SK-N-SH (cell line): ENCODE measurements at regions of chr12 and their contacts with region 1.

Region 1: GRCh38 chr12:76790564-76791552 is 26.9 kb downstream of the ZDHHC17 start:
- DNase-seq: peak; percentile 36
- H3K4me3 ChIP-seq: no peak overlapping the region; a peak in 1 of 4 replicates
- H3K27ac ChIP-seq: no peak overlapping the region
- H3K4me1 ChIP-seq: no peaks in the 10 kb centered on the region
- H3K27me3 ChIP-seq: no peaks in the 10 kb centered on the region
- CTCF ChIP-seq: peak; percentile 74
- EP300 ChIP-seq: no peak
- RAD21 ChIP-seq: peak; percentile 81

Region 2: GRCh38 chr12:76621582-76622024 is 169.3 kb before region 1 on chr12:
- CTCF ChIA-PET with region 1: interaction called, 63 read pairs
- POLR2A ChIA-PET with region 1: no interaction called
- DNase-seq: peak; percentile 63
- H3K4me3 ChIP-seq: no peak overlapping the region; a peak in 1 of 4 replicates
- H3K27ac ChIP-seq: no peak overlapping the region
- H3K4me1 ChIP-seq: peaks cover 0 to 3% of the 10 kb centered on the region in 2 experiments; a peak in 2 of 4 replicates
- H3K27me3 ChIP-seq: no peaks in the 10 kb centered on the region
- CTCF ChIP-seq: peak; percentile 96
- EP300 ChIP-seq: no peak
- RAD21 ChIP-seq: peak; percentile 98

Region 3: DNA sequence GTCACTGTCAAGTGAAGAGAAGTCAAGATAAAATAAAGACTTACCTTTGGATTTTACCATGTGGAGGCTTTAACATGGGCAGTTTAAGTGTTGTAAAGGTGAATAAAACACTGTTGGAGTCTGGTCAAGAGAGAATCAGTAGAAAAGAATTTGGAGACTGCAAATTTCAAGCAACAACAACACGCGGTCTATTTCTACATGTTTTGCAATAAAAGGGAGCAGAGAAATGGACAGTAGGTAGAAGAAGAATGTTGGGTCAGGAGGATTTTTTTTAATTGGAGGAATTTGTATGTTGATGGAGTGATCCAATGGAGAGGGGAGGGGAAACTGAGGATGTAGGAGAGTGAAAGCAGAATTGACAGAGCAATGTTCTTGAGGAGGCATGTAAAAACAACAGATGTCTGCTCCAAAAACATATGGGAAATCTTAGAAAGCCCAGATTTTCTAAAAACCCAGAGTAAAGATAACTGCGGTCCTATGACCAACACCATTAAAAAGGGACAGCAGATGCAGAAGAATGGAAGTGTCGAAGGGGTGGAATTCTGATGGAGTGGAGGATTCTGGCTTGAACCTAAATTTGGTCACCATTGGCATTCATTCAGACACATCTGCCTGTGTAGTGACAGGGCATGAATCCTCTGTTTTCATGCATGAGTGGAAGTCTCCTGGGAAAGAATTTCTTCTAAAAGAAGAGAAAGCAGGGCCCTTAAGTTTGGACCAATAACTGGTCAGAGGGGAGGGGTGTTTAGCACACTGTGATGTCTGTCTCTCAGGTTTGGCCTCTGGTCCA is 163.3 kb before region 1 on chr12:
- CTCF ChIA-PET with region 1: interaction called, 63 read pairs
- POLR2A ChIA-PET with region 1: no interaction called
- DNase-seq: no peak
- H3K4me3 ChIP-seq: no peak overlapping the region
- H3K27ac ChIP-seq: no peak overlapping the region
- H3K4me1 ChIP-seq: peaks cover 0 to 3% of the 10 kb centered on the region in 2 experiments; a peak in 1 of 4 replicates
- H3K27me3 ChIP-seq: no peaks in the 10 kb centered on the region
- CTCF ChIP-seq: no peak
- EP300 ChIP-seq: no peak
- RAD21 ChIP-seq: no peak

Region 4: GRCh38 chr12:76763743-76764675 is 26.8 kb before region 1 on chr12 and contains the start of gene ZDHHC17:
- CTCF ChIA-PET with region 1: interaction called, 12 read pairs
- POLR2A ChIA-PET with region 1: no interaction called
- DNase-seq: peak; percentile 96
- H3K4me3 ChIP-seq: peak within 1 kb of the TSS; percentile 74 to 78
- H3K27ac ChIP-seq: peak within 1 kb of the TSS; percentile 94 to 98
- H3K4me1 ChIP-seq: peaks cover 6 to 12% of the 10 kb centered on the region in 2 experiments; a peak in 1 of 4 replicates
- H3K27me3 ChIP-seq: no peaks in the 10 kb centered on the region
- CTCF ChIP-seq: no peak
- EP300 ChIP-seq: peak; percentile 30 to 32; a peak in 2 of 4 replicates
- RAD21 ChIP-seq: no peak
- polyA plus RNA-seq, gene ZDHHC17: 28.6 and 32.8 TPM in 2 replicates

Region 5: DNA sequence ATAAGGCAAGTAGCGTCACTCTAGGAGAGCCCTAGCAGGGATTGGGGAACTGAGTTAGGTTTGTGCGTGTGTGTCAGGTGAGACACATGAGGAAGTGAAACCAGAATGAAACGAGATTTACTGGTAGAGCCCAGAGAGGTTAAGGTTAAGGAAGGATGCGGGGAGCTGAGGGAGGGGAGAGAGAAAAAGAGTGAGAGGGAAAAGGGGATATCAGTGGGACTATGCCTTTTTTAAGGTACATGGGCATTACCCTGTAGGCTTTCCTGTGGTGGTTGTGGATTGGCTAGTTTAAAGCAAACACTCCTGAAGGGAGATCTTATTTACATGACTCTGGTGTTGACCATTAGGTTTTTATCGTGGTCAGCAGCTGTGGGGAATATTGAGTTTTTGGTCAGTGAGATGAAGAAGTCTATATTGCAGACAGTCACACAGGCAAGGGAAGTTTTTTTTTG is 13.1 kb before region 1 on chr12:
- CTCF ChIA-PET with region 1: interaction called, 13 read pairs
- POLR2A ChIA-PET with region 1: no interaction called
- DNase-seq: no peak
- H3K4me3 ChIP-seq: no peak overlapping the region
- H3K27ac ChIP-seq: no peak overlapping the region
- H3K4me1 ChIP-seq: peaks cover 6 to 9% of the 10 kb centered on the region in 2 experiments; a peak in 3 of 4 replicates
- H3K27me3 ChIP-seq: no peaks in the 10 kb centered on the region
- CTCF ChIP-seq: no peak
- EP300 ChIP-seq: no peak
- RAD21 ChIP-seq: no peak

Region 6: GRCh38 chr12:76804435-76804976 is 13.6 kb after region 1 on chr12:
- CTCF ChIA-PET with region 1: interaction called, 10 read pairs
- POLR2A ChIA-PET with region 1: no interaction called
- DNase-seq: no peak
- H3K4me3 ChIP-seq: no peak overlapping the region
- H3K27ac ChIP-seq: no peak overlapping the region
- H3K4me1 ChIP-seq: no peaks in the 10 kb centered on the region
- H3K27me3 ChIP-seq: no peaks in the 10 kb centered on the region
- CTCF ChIP-seq: no peak
- EP300 ChIP-seq: no peak
- RAD21 ChIP-seq: no peak